ENCODE measurements at regions of chr18 and their contacts with region 1.

Region 1: GRCh38 chr18:23503038-23503962 is at the start of gene RMC1:
- DNase-seq: peak; percentile 98
- ATAC-seq: peak; percentile 98
- total RNA-seq, gene RMC1: 12.8 to 18.6 TPM

Region 2: DNA sequence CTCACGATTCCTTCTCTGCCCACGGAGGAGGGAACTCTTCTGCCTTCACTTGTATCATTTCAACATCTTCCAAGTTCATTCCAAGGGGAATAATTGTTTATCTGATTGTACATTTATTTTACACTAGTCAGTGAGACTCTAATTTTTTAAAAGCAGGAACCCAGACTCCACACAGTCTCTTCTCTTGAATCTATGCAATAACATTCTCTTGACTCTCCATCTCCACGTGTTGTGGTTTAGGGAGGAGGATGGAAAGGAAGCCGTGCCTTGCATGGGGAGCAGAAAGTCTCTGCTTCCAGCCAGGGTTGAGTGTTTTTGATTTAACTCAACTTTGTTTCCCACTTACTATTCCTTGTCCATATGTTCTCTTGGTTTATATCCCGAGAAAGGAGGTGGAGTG is 181.3 kb before region 1 on chr18:
- intact Hi-C with region 1: no loop called
- DNase-seq: no peak
- ATAC-seq: no peak

Region 3: DNA sequence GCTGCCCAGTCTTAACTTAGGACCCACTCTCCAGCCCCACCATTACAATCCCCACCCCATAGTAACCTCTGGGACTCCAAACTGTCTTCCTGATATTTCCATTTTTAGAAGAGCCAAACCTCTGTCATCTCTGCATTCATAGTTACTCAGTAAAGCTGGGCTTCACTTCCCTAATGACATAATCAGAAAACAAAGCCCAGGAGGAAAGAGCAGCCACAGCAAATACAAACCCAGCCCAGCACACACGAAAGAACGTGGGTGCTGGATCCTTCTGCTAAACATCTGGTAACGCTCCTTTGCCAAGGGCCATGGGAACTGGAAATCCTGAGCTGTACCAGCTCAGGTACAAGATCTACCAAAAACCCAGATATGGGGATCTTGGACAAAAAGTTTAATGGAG is 87.0 kb before region 1 on chr18:
- intact Hi-C with region 1: no loop called
- DNase-seq: no peak
- ATAC-seq: peak in 1 of 2 donors; percentile 27

Region 4: DNA sequence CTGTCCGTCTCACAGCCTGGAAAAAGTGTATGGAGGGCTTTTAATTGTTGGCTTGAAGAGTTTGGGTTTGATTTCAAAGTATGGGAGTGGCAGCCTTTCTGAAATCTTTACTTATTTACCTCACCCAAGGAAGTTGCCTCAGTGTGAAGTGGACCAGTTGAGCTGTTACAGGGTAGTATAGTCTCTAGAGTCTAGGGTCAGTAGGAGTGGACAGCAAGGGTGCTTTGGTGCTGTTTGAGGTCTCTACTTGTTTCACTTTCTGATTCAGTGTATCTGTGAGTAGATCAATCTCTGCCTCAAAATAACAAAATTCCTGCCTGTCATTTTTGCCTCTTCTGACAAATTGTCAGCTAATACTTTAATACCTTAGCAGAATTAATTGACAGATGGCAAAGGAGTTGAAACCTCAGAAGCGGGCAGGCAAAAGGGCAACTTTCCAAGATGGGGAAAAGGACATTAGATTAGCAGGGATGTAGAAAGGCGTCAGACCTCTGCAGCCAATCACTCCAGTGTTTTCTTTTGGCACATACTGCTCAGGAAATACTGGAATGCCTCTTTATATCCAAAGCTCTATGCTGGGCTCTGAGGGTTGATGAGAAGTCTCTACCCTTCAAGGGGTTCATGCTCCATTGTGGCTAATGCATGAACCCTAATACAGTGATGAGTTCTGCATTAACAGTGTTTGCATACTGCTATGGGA is 44.3 kb before region 1 on chr18:
- intact Hi-C with region 1: loop called in 1 of 2 experiments (anchors 5 kb)
- DNase-seq: no peak
- ATAC-seq: no peak

Region 5: DNA sequence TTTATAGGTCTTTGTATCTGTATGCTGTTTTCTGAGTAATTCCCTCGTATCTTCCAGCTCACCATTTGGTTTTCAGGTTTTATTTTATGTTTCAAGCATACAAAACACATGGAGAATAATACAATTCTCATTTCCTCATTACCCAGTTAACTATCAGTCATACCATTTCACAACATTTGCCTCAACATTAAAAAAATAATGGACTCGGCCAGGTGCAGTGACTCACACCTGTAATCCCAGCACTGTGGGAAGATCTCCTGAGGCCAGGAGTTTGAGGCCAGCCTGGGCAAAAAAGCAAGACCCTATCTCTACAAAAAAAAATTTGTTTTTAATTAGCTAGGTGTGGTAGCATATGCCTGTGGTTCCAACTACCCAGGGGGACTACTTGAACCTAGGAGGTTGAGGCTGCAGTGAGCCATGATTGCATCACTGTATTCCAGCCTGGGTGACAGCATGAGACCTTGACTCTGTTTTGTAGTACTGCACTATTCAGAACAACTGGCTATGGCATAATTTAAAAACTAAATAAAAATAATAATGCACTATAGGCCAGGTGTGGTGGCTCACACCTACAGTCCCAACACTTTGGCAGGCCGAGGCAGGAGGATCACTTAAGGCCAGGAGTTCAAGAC is 62.7 kb after region 1 on chr18:
- intact Hi-C with region 1: loop called in 1 of 2 experiments (anchors 5 kb)
- DNase-seq: no peak
- ATAC-seq: no peak

Region 6: DNA sequence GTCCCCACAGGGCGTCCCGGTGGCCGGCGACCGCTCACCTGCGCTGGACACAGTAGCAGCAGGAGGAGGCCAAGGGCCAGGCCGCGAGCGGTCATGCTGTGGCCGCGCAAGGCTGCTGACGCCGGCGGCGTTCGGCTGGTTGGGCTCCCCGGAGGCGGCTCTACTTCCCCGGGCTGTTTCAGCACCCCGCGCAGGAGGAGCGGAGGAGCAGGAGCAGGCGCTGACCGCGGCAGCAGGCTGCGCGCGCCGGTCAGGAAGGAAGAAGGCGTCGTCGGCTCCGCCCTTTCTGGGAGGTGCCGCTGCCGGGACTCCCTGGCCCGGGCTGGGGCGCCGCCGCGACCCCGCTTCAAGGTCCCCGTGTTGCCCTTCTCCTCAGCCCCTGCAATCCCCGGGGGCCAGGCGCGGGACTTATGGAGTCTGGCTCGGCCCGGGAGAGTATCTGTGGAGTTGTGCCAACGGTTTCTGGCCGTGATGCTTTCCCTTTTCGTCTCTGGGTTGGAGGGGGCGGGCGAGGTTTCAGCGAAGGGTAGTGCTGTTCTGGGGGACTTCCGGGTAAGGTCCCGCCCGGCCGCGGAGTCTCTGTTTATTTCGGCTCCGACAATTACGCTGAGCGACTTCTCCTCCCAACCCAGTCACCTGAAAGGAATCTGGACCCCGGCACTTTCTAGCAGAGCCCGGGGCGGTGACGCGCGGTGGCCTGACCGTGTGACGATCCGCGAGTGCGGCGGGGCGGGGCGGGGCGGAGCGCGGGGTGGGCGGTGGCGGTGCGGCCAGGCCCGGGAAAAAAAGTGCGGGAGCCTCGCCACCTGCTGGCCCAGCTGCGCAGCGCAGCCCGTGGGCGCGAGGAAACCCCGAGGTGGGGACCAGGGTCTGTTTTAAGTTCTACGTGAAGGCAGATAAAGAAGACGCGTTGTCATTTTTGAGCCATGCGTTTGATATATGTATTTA is 83.2 kb after region 1 on chr18 and contains the start of gene NPC1:
- intact Hi-C with region 1: loop called in 1 of 2 experiments (anchors 5 kb)
- DNase-seq: peak; percentile 96
- ATAC-seq: peak; percentile 98 to 99
- total RNA-seq, gene NPC1: 17.1 to 29.7 TPM

Region 7: GRCh38 chr18:23629444-23629946 is 126.2 kb after region 1 on chr18:
- intact Hi-C with region 1: no loop called
- DNase-seq: no peak
- ATAC-seq: no peak

Region 8: DNA sequence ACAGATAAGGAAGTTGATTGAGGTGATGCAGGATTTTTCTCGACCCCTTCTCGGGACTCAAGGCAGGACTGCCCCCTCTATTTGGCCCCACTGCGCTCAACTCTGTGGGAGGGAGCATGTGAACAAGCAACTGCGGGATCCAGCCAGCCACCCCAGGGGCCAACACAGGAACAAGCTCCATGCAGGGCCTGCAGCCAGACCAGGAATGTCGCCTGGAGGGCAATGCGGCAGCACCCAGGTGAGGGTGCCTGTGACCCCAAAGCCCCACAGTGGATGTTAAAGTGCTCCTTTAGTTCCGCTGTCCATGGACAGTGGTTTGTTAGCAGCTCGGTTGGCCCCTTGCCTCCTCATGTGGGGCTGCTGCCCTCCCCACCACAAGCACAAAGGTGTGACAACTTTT is 1014.3 kb after region 1 on chr18:
- intact Hi-C with region 1: no loop called
- DNase-seq: no peak
- ATAC-seq: no peak